Transverse colon (tissue), 4 donors: ENCODE measurements at regions of chr15 and their contacts with region 1.

Region 1: DNA sequence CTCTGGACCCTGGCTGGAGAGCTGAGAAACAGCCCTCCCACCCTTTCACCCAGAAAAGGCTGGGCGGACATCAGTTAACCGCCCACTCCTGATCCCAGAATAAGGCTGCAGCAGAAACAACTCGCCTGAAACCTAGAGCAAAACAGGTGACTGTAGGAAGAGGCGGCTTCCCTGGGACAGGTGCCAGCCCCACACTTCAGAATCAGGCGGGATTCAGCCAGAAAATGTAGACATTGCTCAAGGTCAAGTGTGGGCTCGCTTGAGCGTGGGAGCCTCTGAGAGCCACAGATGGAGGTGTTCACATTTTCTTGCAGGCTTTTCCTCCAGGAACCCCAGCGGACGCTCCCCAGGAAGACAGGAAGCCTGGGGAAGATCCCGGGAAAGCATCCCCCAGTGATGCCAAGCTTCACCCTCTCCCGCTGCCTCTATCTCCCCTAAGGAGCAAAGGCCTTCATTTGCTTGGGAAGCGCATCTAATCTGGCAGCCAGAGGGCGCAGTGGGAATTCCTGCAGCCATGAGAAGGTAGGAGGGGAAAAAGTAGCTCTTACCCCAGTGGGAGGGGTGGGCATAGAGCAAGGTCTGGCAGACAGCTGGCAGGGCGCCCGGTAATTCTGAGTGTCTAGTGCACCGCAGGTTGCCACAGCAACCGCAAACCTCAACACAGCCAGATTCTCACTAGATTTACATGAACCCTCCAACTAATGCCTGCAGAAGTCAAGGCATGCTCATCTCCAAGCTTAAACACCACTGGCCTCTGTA is 77.7 kb downstream of the OCA2 start:
- DNase-seq: peak; percentile 30
- H3K4me3 ChIP-seq: no peak overlapping the region
- H3K27ac ChIP-seq: no peak overlapping the region
- H3K4me1 ChIP-seq: no peaks in the 10 kb centered on the region
- H3K27me3 ChIP-seq: no peaks in the 10 kb centered on the region
- CTCF ChIP-seq: peak; percentile 22 to 45 (median 41)
- EP300 ChIP-seq: no peak
- POLR2A ChIP-seq: no peak

Region 2: GRCh38 chr15:27271258-27271897 is 750.1 kb before region 1 on chr15:
- in situ Hi-C with region 1: no loop called
- intact Hi-C with region 1: no loop called
- DNase-seq: no peak
- H3K4me3 ChIP-seq: no peak overlapping the region
- H3K27ac ChIP-seq: no peak overlapping the region
- H3K4me1 ChIP-seq: no peaks in the 10 kb centered on the region
- H3K27me3 ChIP-seq: no peaks in the 10 kb centered on the region
- CTCF ChIP-seq: no peak
- EP300 ChIP-seq: no peak
- POLR2A ChIP-seq: no peak

Region 3: DNA sequence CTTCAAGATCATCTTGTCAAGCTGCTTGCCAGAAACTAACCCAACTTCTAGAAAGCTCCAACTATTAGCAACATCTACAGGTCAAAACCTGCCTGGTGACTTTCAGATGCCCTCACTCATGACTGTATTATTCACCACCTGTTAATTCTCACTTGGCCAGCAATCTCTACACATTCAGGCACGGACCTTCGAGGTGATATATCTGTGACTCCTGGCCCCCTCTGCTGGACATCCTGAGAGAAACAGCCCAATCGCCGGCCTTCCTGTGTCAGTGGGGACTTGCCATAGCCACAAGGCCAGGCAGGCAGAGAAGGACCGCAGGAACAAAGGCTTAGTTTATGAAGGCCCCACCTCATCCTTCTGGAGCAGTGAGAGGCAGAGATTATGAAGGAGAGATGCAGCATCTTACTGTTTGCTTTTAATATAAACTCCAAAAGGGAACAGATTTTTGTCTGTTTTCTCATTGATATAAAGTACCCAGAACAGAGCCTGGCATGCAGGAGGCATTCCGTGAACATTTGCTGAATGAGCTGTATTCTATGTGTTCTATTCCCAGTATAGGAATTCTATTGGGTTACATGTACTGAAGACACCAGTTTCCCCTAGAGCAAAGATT is 102.1 kb after region 1 on chr15:
- in situ Hi-C with region 1: loop called in 1 of 4 experiments (anchors 10 kb)
- intact Hi-C with region 1: no loop called
- DNase-seq: peak; percentile 75
- H3K4me3 ChIP-seq: no peak overlapping the region
- H3K27ac ChIP-seq: no peak overlapping the region
- H3K4me1 ChIP-seq: no peaks in the 10 kb centered on the region
- H3K27me3 ChIP-seq: no peaks in the 10 kb centered on the region
- CTCF ChIP-seq: peak; percentile 49 to 75 (median 59)
- EP300 ChIP-seq: no peak
- POLR2A ChIP-seq: no peak